ENCODE measurements at regions of chr10 and their contacts with region 1.

Region 1: DNA sequence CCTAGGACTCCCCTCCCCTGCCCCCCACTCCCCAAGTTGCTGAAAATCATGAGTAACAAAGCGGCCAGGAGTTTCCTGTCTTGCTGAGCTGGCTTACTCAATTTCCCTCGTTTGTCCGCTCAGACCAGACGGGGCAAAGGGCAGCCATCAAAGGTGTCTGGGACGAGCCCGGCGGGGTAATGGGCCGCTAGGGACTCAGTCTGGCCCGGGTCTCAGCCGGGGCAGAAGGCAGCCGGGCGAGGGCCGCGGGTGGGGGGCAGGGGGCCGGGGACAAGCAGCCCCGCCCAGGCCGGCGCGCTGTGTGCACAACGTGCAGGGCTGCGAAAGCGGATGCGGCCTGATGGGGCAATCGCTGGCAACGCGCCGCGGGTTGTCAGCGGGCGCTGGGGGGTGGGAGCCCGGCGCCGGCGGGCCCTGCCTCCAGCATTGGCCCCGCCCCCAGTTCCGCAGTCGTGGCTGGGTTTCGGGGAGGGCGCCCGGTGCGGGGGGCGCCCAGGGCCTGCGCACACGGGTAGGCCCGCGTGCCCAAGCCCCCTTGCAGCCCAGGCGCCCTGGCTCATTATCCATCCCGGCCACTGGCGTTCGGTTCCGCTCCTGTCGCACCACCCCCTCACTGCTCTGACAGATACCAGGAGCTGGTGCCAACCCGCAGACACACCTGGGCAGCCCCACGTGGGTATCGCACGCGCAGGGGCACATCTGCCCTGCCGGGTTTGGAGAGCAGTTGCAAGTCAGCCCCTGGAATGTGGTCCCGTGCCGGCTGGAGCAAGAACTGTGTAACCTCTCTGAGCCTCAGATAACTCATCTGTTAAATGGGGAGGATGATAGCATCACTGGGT is 35.1 kb downstream of the DNAJB12 start:
- DNase-seq: peak; percentile 93
- ATAC-seq: peak; percentile 52
- H3K4me3 Mint-ChIP-seq: peak overlapping the region; percentile 86
- H3K27ac Mint-ChIP-seq: peak overlapping the region; percentile 99
- H3K4me1 Mint-ChIP-seq: peaks cover 78% of the 10 kb centered on the region
- H3K27me3 Mint-ChIP-seq: no peaks in the 10 kb centered on the region
- CTCF ChIP-seq: no peak

Region 2: DNA sequence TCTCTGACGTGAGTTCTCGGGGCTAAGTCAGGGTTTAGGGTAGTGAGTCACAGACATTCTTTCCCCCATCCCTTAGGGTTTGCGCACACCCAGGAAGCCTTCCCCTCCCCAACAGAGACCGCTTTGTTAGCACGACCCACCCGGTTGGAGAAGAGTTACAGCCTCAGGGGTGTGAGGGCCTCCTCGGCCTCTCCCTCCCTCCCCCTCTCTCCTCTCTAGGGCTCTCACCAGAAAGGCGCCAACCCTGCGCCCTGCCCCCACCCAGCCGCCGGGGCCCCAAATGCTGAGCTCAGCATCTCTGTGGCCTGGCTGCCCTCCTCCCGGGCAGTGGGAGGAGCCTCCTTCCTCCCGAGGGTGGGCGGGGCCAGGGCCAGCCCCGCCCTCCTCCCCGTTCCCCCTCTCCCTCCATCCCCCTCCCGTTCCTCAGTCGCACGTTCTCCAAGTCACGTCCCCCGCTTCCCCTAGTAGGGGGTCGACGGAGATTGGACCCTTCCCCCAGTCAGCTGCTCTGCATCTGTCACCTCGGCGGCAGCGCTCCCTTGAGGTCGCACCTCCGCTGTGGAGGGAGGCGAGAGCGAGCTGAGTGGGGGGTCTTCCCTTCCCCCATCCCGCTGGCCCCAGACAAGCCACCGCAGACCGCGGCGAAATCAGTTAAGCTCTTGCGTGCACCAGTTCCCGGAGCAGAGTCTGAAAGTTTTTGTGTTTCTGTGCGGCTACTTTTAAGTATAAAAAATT is 58.9 kb before region 1 on chr10:
- CTCF ChIA-PET with region 1: interaction called, 6 read pairs
- POLR2A ChIA-PET with region 1: interaction called, 52 read pairs
- intact Hi-C with region 1: no loop called
- DNase-seq: peak; percentile 96
- ATAC-seq: peak; percentile 82
- H3K4me3 Mint-ChIP-seq: peak overlapping the region; percentile 79
- H3K27ac Mint-ChIP-seq: peak overlapping the region; percentile 96
- H3K4me1 Mint-ChIP-seq: peaks cover 52% of the 10 kb centered on the region
- H3K27me3 Mint-ChIP-seq: no peaks in the 10 kb centered on the region
- CTCF ChIP-seq: no peak

Region 3: DNA sequence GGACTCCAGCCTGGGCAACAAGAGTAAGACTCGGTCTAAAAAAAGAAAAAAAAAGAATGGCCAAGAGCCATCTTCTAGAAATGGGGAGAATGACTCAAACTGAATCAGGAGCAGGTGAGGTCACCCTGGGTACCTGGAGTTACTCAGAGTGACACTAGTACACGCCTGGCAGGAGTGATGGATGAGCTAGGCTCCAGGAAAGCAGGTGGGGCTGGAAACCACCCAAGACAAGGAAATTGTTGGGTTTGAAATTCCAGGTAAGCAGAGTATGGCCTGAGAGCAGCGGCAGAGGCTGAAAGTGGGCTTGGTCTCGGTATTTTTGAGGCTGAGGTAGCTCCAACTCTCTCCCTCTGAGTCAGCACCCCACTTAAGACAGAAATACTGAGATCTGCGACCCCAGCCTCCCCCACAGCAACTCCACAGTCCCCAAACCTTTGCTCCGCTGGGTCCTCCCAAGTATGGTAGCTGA is 27.4 kb before region 1 on chr10:
- CTCF ChIA-PET with region 1: interaction called, 18 read pairs
- POLR2A ChIA-PET with region 1: interaction called, 796 read pairs
- intact Hi-C with region 1: no loop called
- DNase-seq: peak; percentile 88
- ATAC-seq: peak; percentile 54
- H3K4me3 Mint-ChIP-seq: peak overlapping the region; percentile 41
- H3K27ac Mint-ChIP-seq: peak overlapping the region; percentile 99
- H3K4me1 Mint-ChIP-seq: peaks cover 55% of the 10 kb centered on the region
- H3K27me3 Mint-ChIP-seq: no peaks in the 10 kb centered on the region
- CTCF ChIP-seq: no peak

Region 4: DNA sequence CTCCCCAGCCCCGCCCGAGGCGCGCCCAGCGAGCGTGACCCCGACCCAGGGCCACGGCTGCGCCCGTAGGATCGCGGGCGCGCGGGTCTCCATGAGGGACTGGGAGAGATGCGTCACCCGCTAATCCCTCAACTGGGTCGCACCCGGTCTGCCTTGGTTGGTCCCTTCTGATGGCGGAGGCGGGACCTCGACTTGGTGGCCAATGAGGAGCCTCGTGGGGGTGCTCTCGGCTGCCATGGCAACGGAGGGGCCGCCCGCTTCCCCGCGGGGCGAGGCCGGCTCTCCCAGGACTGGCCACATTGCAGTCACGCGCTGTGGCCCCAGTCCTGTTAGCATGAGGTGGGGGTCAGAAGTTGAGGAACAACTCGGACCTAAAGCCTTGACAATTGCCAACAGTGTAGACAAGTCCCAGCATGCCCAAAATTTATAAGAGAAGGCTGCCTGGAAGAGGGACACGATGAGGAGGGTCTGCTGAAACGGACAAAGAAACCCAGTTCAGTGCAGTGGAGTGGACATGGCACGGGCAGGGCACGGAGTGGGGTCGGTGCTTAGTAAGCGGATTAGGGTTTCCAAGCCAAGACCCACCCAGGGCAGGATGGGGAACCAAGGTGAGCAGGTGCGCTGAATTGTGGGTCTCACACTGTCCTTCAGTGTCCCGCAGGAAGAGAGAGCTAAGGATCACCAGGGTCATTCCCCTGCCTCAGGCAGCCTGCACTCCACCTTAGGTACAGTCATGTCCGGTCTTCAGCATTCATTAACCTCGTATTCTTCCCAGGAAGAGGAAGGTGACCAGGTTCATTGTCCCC is 21.5 kb before region 1 on chr10:
- CTCF ChIA-PET with region 1: interaction called, 18 read pairs
- POLR2A ChIA-PET with region 1: interaction called, 796 read pairs
- intact Hi-C with region 1: no loop called
- DNase-seq: peak; percentile 98
- ATAC-seq: peak; percentile 76
- H3K4me3 Mint-ChIP-seq: peak overlapping the region; percentile 80
- H3K27ac Mint-ChIP-seq: peak overlapping the region; percentile 99
- H3K4me1 Mint-ChIP-seq: peaks cover 54% of the 10 kb centered on the region
- H3K27me3 Mint-ChIP-seq: no peaks in the 10 kb centered on the region
- CTCF ChIP-seq: no peak

Region 5: DNA sequence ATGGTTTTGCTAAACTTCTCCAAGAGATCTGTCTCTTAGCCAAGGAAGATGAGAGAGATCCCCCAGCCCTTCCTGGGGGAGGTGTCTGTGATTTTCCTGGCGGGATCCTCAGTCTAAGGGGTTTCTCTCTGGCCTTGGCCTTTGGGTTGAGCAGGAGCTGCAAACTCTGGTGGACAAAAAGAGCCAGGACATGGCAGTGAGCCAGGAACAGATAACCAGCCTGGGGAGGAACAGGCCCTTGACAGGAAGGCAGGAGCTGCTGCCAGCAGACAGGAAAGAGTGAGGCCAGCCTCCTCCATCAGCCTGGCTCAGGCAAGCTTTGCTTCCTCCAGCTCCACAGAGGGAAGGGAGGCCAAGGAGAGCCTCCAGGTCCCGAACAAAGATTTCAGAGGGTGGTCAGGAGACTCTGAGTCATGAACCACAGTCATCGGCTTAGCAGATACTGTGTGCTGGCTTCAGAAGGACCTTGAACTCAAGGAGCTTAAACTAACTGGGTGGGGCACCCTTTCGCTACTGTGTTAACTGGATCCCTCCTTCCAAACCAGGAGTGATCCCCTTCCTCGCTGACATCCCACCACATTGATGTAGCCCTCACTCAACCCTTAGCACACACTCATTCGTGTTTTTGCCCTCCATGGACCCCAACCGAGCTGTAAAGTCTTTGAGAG is 11.2 kb before region 1 on chr10:
- CTCF ChIA-PET with region 1: interaction called, 6 read pairs
- POLR2A ChIA-PET with region 1: interaction called, 796 read pairs
- intact Hi-C with region 1: loop called (anchors 2 kb)
- DNase-seq: peak; percentile 69
- ATAC-seq: peak; percentile 51
- H3K4me3 Mint-ChIP-seq: no peak overlapping the region
- H3K27ac Mint-ChIP-seq: peak overlapping the region; percentile 86
- H3K4me1 Mint-ChIP-seq: peaks cover 68% of the 10 kb centered on the region
- H3K27me3 Mint-ChIP-seq: no peaks in the 10 kb centered on the region
- CTCF ChIP-seq: no peak